ENCODE measurements at regions of chr18 and their contacts with region 1.

Region 1: GRCh38 chr18:77054606-77055428 is 77.8 kb downstream of the MBP start:
- DNase-seq: peak; percentile 93
- ATAC-seq: peak; percentile 83

Region 2: GRCh38 chr18:77000527-77000926 is 54.3 kb before region 1 on chr18:
- intact Hi-C with region 1: loop called (anchors 1 kb)
- DNase-seq: peak; percentile 88
- ATAC-seq: peak; percentile 54

Region 3: GRCh38 chr18:77013811-77014521 is 40.9 kb before region 1 on chr18:
- intact Hi-C with region 1: loop called (anchors 2 kb)
- DNase-seq: no peak
- ATAC-seq: peak; percentile 96

Region 4: GRCh38 chr18:77132371-77133050 is 77.7 kb after region 1 on chr18 and contains the start of gene MBP:
- intact Hi-C with region 1: loop called (anchors 5 kb)
- DNase-seq: peak; percentile 90
- ATAC-seq: peak; percentile 50
- total RNA-seq, gene MBP: 34.9 TPM

Region 5: GRCh38 chr18:77210249-77210648 is 155.4 kb after region 1 on chr18:
- intact Hi-C with region 1: loop called (anchors 5 kb)
- DNase-seq: no peak
- ATAC-seq: no peak

Measured in Right ventricle myocardium inferior (tissue), 1 donor.